ENCODE measurements at regions of chr11 and their contacts with region 1.

Region 1: DNA sequence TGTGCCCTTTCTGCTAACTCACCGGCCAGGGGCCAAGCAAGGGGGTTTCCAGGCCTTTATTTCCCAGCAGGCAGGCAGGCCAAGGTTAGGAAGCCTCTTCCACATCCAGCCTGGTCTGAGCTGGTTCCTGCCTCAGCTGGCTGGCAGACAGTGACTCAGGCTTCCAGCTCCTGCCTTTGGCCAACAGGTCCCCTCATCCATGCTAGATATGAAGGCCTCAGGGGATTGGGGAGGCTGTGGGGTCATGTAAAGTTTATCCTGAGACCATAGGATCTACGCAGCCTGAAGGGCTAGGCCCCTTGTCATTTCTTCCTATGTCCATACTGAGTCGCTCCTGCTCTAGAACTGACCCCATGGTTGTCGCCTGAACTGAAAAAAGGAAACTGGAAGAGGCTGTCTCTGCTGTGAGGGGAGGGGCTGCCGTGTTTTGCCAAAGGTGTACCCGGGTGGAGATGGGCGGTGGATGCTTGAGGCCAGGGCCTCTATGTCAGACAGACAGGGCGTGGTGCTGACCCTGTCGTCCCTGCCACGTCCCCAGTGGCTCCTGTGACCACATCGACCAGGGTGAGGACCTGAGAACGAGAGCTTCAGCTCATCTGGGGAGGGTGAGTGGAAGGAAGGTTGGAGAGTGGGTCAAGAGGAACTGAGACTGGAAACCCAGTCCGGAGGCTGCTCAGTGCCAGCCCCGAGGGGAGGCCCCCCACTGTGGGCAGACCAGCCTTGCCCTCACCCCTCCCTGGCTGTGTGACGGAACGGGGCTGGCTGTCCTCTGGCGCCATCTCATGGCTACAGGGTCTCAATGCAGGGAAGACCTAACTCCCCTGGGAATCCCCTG is 17.0 kb downstream of the P2RY6 start:
- DNase-seq: peak; percentile 86 to 98
- H3K4me3 ChIP-seq: peak overlapping the region; percentile 32; the same call in 1 of the 2 replicates
- H3K27ac ChIP-seq: peak overlapping the region; percentile 88
- H3K4me1 ChIP-seq: peaks cover 35% of the 10 kb centered on the region
- H3K27me3 ChIP-seq: no peaks in the 10 kb centered on the region
- CTCF ChIP-seq: peak; percentile 99

Region 2: GRCh38 chr11:72722050-72722748 is 566.9 kb before region 1 on chr11:
- CTCF ChIA-PET with region 1: no interaction called
- POLR2A ChIA-PET with region 1: no interaction called
- intact Hi-C with region 1: loop called (anchors 2 kb)
- DNase-seq: peak; percentile 85 to 88
- H3K4me3 ChIP-seq: peak overlapping the region; percentile 59
- H3K27ac ChIP-seq: peak overlapping the region; percentile 45
- H3K4me1 ChIP-seq: peaks cover 15% of the 10 kb centered on the region
- H3K27me3 ChIP-seq: no peaks in the 10 kb centered on the region
- CTCF ChIP-seq: no peak

Region 3: GRCh38 chr11:73184953-73185671 is 104.0 kb before region 1 on chr11:
- CTCF ChIA-PET with region 1: interaction called, 6 read pairs
- POLR2A ChIA-PET with region 1: no interaction called
- intact Hi-C with region 1: loop called (anchors 1 kb)
- DNase-seq: peak; percentile 80 to 88
- H3K4me3 ChIP-seq: peak overlapping the region; percentile 36; the same call in 1 of the 2 replicates
- H3K27ac ChIP-seq: peak overlapping the region; percentile 82
- H3K4me1 ChIP-seq: peaks cover 49% of the 10 kb centered on the region
- H3K27me3 ChIP-seq: no peaks in the 10 kb centered on the region
- CTCF ChIP-seq: peak; percentile 96

Region 4: GRCh38 chr11:73242251-73243079 is 46.6 kb before region 1 on chr11:
- CTCF ChIA-PET with region 1: interaction called, 24 read pairs
- POLR2A ChIA-PET with region 1: no interaction called
- intact Hi-C with region 1: loop called (anchors 1 kb)
- DNase-seq: peak in 1 of 2 experiments; percentile 79
- H3K4me3 ChIP-seq: no peak overlapping the region
- H3K27ac ChIP-seq: no peak overlapping the region
- H3K4me1 ChIP-seq: peaks cover 44% of the 10 kb centered on the region
- H3K27me3 ChIP-seq: no peaks in the 10 kb centered on the region
- CTCF ChIP-seq: peak; percentile 94

Region 5: GRCh38 chr11:73257342-73258103 is 31.6 kb before region 1 on chr11:
- CTCF ChIA-PET with region 1: interaction called, 21 read pairs
- POLR2A ChIA-PET with region 1: interaction called, 17 read pairs
- intact Hi-C with region 1: loop called (anchors 1 kb)
- DNase-seq: peak; percentile 88 to 99
- H3K4me3 ChIP-seq: peak overlapping the region; percentile 36; the same call in 1 of the 2 replicates
- H3K27ac ChIP-seq: peak overlapping the region; percentile 96
- H3K4me1 ChIP-seq: peaks cover 53% of the 10 kb centered on the region
- H3K27me3 ChIP-seq: no peaks in the 10 kb centered on the region
- CTCF ChIP-seq: no peak

Region 6: GRCh38 chr11:73335204-73335923 is 46.3 kb after region 1 on chr11:
- CTCF ChIA-PET with region 1: interaction called, 17 read pairs
- POLR2A ChIA-PET with region 1: no interaction called
- intact Hi-C with region 1: loop called (anchors 2 kb)
- DNase-seq: peak; percentile 67 to 90
- H3K4me3 ChIP-seq: no peak overlapping the region
- H3K27ac ChIP-seq: no peak overlapping the region
- H3K4me1 ChIP-seq: peaks cover 20% of the 10 kb centered on the region
- H3K27me3 ChIP-seq: no peaks in the 10 kb centered on the region
- CTCF ChIP-seq: peak; percentile 99